ENCODE measurements at regions of chr7 and their contacts with region 1.

Region 1: DNA sequence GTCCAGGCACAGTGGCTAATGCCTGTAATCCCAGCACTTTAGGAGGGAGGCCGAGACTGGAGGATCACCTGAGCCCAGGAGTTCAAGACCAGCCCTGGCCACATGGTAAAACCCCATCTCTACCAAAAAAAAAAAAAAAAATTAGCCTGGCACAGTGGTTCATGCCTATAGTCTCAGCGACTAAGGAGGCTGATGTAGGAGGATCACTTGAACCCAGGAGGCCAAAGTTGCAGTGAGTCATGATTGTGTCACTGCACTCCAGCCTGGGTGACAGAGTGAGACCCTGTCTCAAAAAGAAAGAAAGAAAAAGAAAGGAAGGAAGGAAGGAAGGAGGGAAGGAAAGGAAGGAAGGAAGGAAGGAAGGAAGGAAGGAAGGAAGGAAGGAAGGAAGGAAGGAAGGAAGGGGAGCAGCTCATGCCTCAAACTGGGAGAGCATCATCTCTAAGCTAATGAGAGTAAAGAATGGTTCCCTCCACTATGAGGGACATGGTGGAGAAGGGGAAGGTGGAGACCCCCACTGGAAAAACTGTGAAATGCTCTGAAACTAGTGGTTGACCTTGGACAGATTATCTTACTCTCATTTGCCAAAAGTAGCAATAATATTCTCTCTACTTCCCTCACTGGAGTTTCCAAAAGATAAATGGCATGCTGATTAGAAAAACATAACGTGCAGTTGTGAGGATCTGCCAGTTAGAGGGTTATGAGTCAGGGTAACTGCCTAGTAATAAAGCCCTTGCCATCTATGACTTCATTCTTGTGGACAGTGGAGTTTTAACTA is 16.8 kb downstream of the GIMAP5 start:
- DNase-seq: peak; percentile 64
- H3K4me3 Mint-ChIP-seq: no peak overlapping the region
- H3K27ac Mint-ChIP-seq: peak overlapping the region; percentile 98
- H3K4me1 Mint-ChIP-seq: peaks cover 71% of the 10 kb centered on the region
- H3K27me3 Mint-ChIP-seq: no peaks in the 10 kb centered on the region

Region 2: GRCh38 chr7:150368096-150368883 is 385.7 kb before region 1 on chr7 and contains the start of gene REPIN1:
- CTCF ChIA-PET with region 1: no interaction called
- intact Hi-C with region 1: loop called (anchors 2 kb)
- DNase-seq: peak; percentile 84
- H3K4me3 Mint-ChIP-seq: peak within 1 kb of the TSS; percentile 94
- H3K27ac Mint-ChIP-seq: peak within 1 kb of the TSS; percentile 95
- H3K4me1 Mint-ChIP-seq: peaks cover 45% of the 10 kb centered on the region
- H3K27me3 Mint-ChIP-seq: no peaks in the 10 kb centered on the region
- total RNA-seq, gene REPIN1: 45.7 to 49.3 TPM

Region 3: DNA sequence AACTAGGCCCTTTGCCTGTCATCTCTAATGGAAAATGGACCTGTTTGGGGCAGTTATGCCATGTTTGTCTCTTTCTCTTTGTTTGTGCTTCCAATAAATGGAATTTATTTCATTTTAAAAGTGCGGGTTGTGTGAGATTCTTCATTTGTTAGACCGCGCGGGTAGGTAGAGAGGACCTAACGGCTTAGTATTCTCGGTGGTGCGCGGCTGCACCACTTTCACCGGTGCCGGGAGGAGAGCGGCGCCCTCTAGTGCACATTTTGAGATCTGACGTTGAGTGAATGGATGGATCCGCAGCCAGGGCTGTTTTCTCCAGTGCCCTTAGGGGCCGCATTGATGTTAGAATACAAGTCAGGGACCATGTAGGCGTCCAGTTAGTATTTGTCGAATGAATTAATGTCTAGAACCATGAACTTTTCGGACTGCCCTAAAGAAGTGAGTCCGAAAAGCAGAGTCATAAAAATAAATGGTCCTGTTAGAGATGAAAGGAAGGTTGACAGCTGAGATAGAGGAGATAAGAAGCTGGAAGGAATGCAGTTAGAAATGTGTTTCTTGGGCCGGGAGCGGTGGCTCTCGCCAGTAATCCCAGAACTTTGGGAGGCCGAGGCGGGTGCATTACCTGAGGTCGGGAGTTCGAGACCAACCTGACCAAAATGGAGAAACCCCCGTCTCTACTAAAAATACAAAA is 332.9 kb before region 1 on chr7:
- CTCF ChIA-PET with region 1: no interaction called
- intact Hi-C with region 1: loop called (anchors 1 kb)
- DNase-seq: peak; percentile 94
- H3K4me3 Mint-ChIP-seq: peak overlapping the region; percentile 4
- H3K27ac Mint-ChIP-seq: no peak overlapping the region
- H3K4me1 Mint-ChIP-seq: peaks cover 12% of the 10 kb centered on the region
- H3K27me3 Mint-ChIP-seq: peaks cover 2% of the 10 kb centered on the region

Region 4: GRCh38 chr7:150514748-150515222 is 239.2 kb before region 1 on chr7 and contains the start of gene GIMAP7:
- CTCF ChIA-PET with region 1: interaction called, 3 read pairs
- intact Hi-C with region 1: loop called (anchors 1 kb)
- DNase-seq: peak; percentile 70
- H3K4me3 Mint-ChIP-seq: peak within 1 kb of the TSS; percentile 96
- H3K27ac Mint-ChIP-seq: peak within 1 kb of the TSS; percentile 98
- H3K4me1 Mint-ChIP-seq: peaks cover 49% of the 10 kb centered on the region
- H3K27me3 Mint-ChIP-seq: no peaks in the 10 kb centered on the region
- total RNA-seq, gene GIMAP7: 41.6 TPM

Region 5: DNA sequence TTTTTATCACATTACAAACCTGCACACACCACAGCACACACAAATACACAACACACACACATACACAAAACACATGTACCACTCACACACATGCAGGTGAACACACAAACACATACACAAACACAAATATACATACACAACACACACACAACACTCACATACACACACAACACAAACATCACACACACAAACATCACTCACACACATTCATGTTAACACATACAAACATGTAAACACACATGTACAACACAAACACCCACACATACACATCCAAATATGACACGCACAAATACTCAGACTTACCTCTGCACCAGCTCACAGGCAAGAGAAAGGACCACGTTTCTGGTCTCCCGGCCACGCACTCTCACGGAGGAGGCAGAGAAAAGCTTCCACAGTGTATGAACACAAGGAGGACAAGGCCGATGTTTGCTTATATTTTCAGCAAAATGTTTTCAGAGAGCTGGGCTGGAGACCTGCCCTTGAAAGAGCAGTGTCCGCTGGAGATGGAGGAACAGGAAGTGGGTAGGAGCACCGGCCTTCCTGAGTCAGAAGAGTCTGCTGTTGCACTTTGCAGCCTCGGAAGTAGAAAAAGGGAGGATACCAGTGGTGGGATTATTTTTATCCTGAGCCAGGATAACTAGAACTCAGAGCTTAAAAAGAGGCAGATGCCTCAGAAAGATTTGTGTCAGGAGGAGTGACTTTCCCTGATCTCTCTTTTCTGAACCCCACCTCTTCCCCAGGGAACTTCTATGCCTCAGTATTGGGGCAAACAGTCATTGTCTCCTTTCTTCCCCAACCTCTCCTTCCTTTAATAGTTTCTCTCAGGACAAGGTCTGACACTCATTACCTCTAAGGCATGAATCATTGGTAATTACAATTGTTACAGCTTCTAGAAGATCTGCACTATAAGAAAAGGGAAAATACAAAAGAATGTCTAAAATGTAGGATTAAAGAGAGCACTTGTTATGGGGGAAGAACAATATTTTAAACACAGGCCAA is 121.8 kb before region 1 on chr7 and contains the start of gene GIMAP6:
- CTCF ChIA-PET with region 1: interaction called, 6 read pairs
- intact Hi-C with region 1: loop called (anchors 1 kb)
- DNase-seq: peak; percentile 64
- H3K4me3 Mint-ChIP-seq: peak within 1 kb of the TSS; percentile 85
- H3K27ac Mint-ChIP-seq: peak within 1 kb of the TSS; percentile 92
- H3K4me1 Mint-ChIP-seq: peaks cover 67% of the 10 kb centered on the region
- H3K27me3 Mint-ChIP-seq: no peaks in the 10 kb centered on the region
- total RNA-seq, gene GIMAP6: 19.2 to 20.7 TPM

Region 6: DNA sequence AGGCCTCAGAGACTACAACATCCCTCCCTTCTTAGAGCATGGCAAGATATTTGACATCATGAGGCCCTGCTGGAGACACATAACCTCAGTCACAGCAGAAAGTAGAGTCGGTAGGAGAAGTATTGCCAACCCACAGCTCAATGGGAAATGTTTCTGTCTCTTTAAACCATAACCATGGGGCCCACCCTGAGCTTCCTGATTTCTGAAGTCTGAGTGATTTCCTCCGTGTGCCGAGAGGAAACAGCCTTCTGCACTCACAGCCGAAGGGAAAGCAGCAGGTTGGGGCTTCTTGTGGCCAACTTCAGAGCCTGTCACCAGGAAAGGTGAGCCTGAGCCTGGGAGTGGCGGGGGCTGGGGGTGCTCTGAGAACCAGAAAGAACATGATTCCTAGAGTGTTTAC is 37.6 kb before region 1 on chr7 and contains the start of gene GIMAP1:
- CTCF ChIA-PET with region 1: interaction called, 6 read pairs
- intact Hi-C with region 1: loop called (anchors 1 kb)
- DNase-seq: peak; percentile 81
- H3K4me3 Mint-ChIP-seq: peak within 1 kb of the TSS; percentile 97
- H3K27ac Mint-ChIP-seq: peak within 1 kb of the TSS; percentile 92
- H3K4me1 Mint-ChIP-seq: peaks cover 62% of the 10 kb centered on the region
- H3K27me3 Mint-ChIP-seq: no peaks in the 10 kb centered on the region
- total RNA-seq, gene GIMAP1: 5.1 to 5.3 TPM